Naive thymus-derived CD4-positive, alpha-beta T cell (primary cell): ENCODE measurements at regions of chr19 and their contacts with region 1.

Region 1: GRCh38 chr19:57819475-57820148 is 4.9 kb upstream of the ZNF552 start:
- DNase-seq: peak; percentile 45 to 85 (median 79)
- ATAC-seq: peak; percentile 89
- H3K4me3 ChIP-seq: peak overlapping the region; percentile 98
- H3K4me3 Mint-ChIP-seq: peak overlapping the region; percentile 95 to 99 (median 98)
- H3K27ac ChIP-seq: peak overlapping the region; percentile 92
- H3K27ac Mint-ChIP-seq: peak overlapping the region; percentile 88 to 99 (median 95)
- H3K4me1 ChIP-seq: peaks cover 0 to 13% of the 10 kb centered on the region in 2 donors
- H3K4me1 Mint-ChIP-seq: peaks cover 38 to 73% (median 67%) of the 10 kb centered on the region in 7 donors
- H3K27me3 ChIP-seq: no peaks in the 10 kb centered on the region
- H3K27me3 Mint-ChIP-seq: no peaks in the 10 kb centered on the region

Region 2: DNA sequence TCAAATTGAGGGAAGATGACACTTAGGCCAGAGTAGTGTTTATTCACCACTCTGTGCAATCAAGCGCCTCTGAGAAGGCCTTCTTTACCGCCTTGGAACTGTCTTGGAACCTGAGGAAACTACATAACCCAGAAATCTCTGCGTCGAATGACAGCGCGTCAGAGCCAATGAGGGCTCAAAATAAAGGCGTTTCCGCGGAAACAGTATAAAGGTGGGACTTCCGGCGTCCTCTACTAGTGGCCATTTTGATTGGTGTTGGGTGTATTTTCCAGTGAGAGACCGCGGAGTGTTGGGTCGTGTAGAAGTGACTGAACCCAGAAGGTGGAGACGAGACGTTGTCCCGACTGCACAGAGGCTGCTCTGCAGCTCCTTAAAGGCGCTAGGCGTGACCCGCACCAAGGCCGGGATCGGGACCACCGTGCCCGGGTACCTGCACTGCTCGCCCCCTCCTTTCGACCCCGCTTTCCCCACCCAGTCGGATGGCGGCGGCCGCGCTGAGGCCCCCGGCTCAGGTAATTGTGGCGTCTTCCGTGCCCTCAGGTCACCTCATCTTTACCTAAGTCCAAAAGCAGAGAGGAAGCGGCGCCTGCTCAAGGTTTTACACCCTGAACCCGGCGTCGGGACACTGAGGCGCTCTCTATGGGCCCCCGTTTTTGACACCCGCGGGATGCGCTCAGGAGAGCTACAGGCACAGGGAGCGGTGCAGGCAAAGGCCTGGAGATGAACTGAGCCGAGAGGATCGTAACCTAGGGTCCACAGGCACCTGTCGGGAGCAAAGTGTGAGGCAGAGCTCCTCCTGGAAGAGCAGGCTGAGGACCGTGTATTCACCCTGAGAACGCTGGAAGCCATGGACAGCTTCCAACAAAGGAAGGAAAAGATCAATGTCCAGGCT is 72.8 kb before region 1 on chr19 and contains the start of gene ZNF776:
- CTCF ChIA-PET with region 1: no interaction called
- POLR2A ChIA-PET with region 1: interaction called, 8 read pairs
- intact Hi-C with region 1: loop called (anchors 1 kb)
- DNase-seq: peak; percentile 40 to 90 (median 84)
- ATAC-seq: peak; percentile 99
- H3K4me3 ChIP-seq: peak within 1 kb of the TSS; percentile 86
- H3K4me3 Mint-ChIP-seq: peak within 1 kb of the TSS; percentile 91 to 99 (median 94)
- H3K27ac ChIP-seq: peak within 1 kb of the TSS; percentile 85
- H3K27ac Mint-ChIP-seq: peak within 1 kb of the TSS; percentile 81 to 99 (median 94)
- H3K4me1 ChIP-seq: peaks cover 6 to 16% of the 10 kb centered on the region in 2 donors
- H3K4me1 Mint-ChIP-seq: peaks cover 13 to 40% (median 26%) of the 10 kb centered on the region in 7 donors
- H3K27me3 ChIP-seq: no peaks in the 10 kb centered on the region
- H3K27me3 Mint-ChIP-seq: no peaks in the 10 kb centered on the region
- total RNA-seq, gene ZNF776: 18.9 to 52.3 (median 21.8) TPM

Region 3: GRCh38 chr19:57781815-57782214 is 37.8 kb before region 1 on chr19:
- CTCF ChIA-PET with region 1: no interaction called
- POLR2A ChIA-PET with region 1: no interaction called
- intact Hi-C with region 1: no loop called
- DNase-seq: no peak
- ATAC-seq: no peak
- H3K4me3 ChIP-seq: no peak overlapping the region
- H3K4me3 Mint-ChIP-seq: no peak overlapping the region
- H3K27ac ChIP-seq: no peak overlapping the region
- H3K27ac Mint-ChIP-seq: no peak overlapping the region
- H3K4me1 ChIP-seq: no peaks in the 10 kb centered on the region
- H3K4me1 Mint-ChIP-seq: peaks cover 0 to 5% (median 0%) of the 10 kb centered on the region in 7 donors
- H3K27me3 ChIP-seq: no peaks in the 10 kb centered on the region
- H3K27me3 Mint-ChIP-seq: no peaks in the 10 kb centered on the region

Region 4: GRCh38 chr19:57850553-57851017 is 31.0 kb after region 1 on chr19:
- CTCF ChIA-PET with region 1: no interaction called
- POLR2A ChIA-PET with region 1: interaction called, 3 read pairs
- intact Hi-C with region 1: loop called (anchors 1 kb)
- DNase-seq: no peak
- ATAC-seq: no peak
- H3K4me3 ChIP-seq: peak overlapping the region; percentile 72
- H3K4me3 Mint-ChIP-seq: peak overlapping the region; percentile 93 to 97 (median 94)
- H3K27ac ChIP-seq: peak overlapping the region; percentile 92
- H3K27ac Mint-ChIP-seq: peak overlapping the region; percentile 90 to 98 (median 95)
- H3K4me1 ChIP-seq: peaks cover 7 to 11% of the 10 kb centered on the region in 2 donors
- H3K4me1 Mint-ChIP-seq: peaks cover 22 to 32% (median 28%) of the 10 kb centered on the region in 7 donors
- H3K27me3 ChIP-seq: no peaks in the 10 kb centered on the region
- H3K27me3 Mint-ChIP-seq: no peaks in the 10 kb centered on the region

Region 5: GRCh38 chr19:58097781-58098681 is 278.4 kb after region 1 on chr19 and contains the start of gene ZSCAN18:
- CTCF ChIA-PET with region 1: no interaction called
- POLR2A ChIA-PET with region 1: interaction called, 3 read pairs
- intact Hi-C with region 1: loop called in 1 of 2 experiments (anchors 2 kb)
- DNase-seq: peak; percentile 77 to 100 (median 99)
- ATAC-seq: peak; percentile 97
- H3K4me3 ChIP-seq: peak within 1 kb of the TSS; percentile 86
- H3K4me3 Mint-ChIP-seq: peak within 1 kb of the TSS; percentile 83 to 100 (median 91)
- H3K27ac ChIP-seq: peak within 1 kb of the TSS; percentile 100
- H3K27ac Mint-ChIP-seq: peak within 1 kb of the TSS; percentile 98 to 100 (median 100)
- H3K4me1 ChIP-seq: peaks cover 0 to 11% of the 10 kb centered on the region in 2 donors
- H3K4me1 Mint-ChIP-seq: peaks cover 8 to 18% (median 15%) of the 10 kb centered on the region in 7 donors
- H3K27me3 ChIP-seq: no peaks in the 10 kb centered on the region
- H3K27me3 Mint-ChIP-seq: no peaks in the 10 kb centered on the region
- total RNA-seq, gene ZSCAN18: 8.2 to 100 (median 78.1) TPM